CD14-positive monocyte (primary cell): ENCODE measurements at regions of chr3 and their contacts with region 1.

Region 1: DNA sequence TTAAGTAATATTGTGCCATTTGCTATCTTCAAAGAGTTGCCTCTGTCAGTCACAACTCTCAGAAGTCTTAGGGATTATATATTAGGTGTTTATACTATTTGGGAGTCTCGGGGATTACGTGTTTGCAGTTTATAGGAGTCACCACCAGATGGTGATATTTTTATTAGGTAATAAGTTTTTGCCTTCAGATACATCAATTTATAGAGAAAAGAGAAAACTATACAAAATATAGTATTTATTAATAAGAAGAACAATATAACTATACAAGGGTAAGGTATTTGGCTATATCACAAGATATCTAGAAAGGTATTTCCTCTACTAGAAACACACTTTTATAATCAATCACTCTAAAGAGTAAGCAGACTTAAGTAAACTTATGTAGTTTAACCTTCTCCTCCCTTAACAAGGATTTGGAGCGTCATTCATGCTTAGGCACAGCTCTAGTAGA is 10.7 kb upstream of the DHX36 start:
- DNase-seq: peak; percentile 7 to 49 (median 29)
- H3K4me3 ChIP-seq: no peak overlapping the region
- H3K4me3 Mint-ChIP-seq: no peak overlapping the region
- H3K27ac ChIP-seq: no peak overlapping the region
- H3K27ac Mint-ChIP-seq: no peak overlapping the region
- H3K4me1 ChIP-seq: no peaks in the 10 kb centered on the region
- H3K4me1 Mint-ChIP-seq: peaks cover 3% of the 10 kb centered on the region
- H3K27me3 ChIP-seq: no peaks in the 10 kb centered on the region
- H3K27me3 Mint-ChIP-seq: no peaks in the 10 kb centered on the region
- CTCF ChIP-seq: peak; percentile 82

Region 2: DNA sequence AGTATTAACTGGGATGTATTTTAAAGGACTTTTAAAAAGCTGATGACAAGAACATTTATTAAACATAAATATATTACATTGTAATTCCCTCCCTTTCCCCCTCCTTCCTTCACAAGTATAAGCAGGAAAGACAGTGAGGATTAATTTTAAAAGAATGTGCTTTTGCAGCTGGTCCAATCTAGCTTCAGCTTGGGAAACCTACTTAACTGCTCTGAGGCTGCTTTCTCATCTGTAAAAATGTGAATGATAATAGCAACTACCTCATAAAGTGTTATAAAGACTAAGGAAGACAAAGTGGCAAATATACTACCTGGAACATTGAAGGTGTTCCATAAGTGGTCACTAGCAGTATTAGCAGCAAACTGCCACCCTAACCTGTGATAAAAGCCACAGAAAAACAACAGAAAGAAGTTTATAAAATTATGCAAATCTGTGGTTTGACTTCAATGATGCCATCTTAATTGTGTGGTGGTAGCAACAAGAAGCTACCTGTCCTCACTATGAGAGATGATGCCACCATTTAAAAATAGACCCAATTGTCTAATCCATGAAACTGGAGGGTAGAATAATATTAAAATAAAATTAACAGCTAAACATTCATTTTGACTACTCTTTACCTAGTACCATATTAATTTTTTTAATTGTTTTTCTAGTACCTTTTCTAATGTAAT is 30.7 kb before region 1 on chr3:
- intact Hi-C with region 1: no loop called
- DNase-seq: no peak
- H3K4me3 ChIP-seq: no peak overlapping the region
- H3K4me3 Mint-ChIP-seq: no peak overlapping the region
- H3K27ac ChIP-seq: no peak overlapping the region
- H3K27ac Mint-ChIP-seq: no peak overlapping the region
- H3K4me1 ChIP-seq: no peaks in the 10 kb centered on the region
- H3K4me1 Mint-ChIP-seq: no peaks in the 10 kb centered on the region
- H3K27me3 ChIP-seq: no peaks in the 10 kb centered on the region
- H3K27me3 Mint-ChIP-seq: no peaks in the 10 kb centered on the region
- CTCF ChIP-seq: no peak

Region 3: GRCh38 chr3:155323063-155323666 is 988.2 kb after region 1 on chr3:
- intact Hi-C with region 1: loop called in 1 of 2 experiments (anchors 10 kb)
- DNase-seq: peak; percentile 21 to 59 (median 46)
- H3K4me3 ChIP-seq: no peak overlapping the region
- H3K4me3 Mint-ChIP-seq: no peak overlapping the region
- H3K27ac ChIP-seq: no peak overlapping the region
- H3K27ac Mint-ChIP-seq: no peak overlapping the region
- H3K4me1 ChIP-seq: no peaks in the 10 kb centered on the region
- H3K4me1 Mint-ChIP-seq: peaks cover 6% of the 10 kb centered on the region
- H3K27me3 ChIP-seq: no peaks in the 10 kb centered on the region
- H3K27me3 Mint-ChIP-seq: peaks cover 0 to 4% (median 4%) of the 10 kb centered on the region in 3 donors
- CTCF ChIP-seq: peak; percentile 68

Region 4: DNA sequence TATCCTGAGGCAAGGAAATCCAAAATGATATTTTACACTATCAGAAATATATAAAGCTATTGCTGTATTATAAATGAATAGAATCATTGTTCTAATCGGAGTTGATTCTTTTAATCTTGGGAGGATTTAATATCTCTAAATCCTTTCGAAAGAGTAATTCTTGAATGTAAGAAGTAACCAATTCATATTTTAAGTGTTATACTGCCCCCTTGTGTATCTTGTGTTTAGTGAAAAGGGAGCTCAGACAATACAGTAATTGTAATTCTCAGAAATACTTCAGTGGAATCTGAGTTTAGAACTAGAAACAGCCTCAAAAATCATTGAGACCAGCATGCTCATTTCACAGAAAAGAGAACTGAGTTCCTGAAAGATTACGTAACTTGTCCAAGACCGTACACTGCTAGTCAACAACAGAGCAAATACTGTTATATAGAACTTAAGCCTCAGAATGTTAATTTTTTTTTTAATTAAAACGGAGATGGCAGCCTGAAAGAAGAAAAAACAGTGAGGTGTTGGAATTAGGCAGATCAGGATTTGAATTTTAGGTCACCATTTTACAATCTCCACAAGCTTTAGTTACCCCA is 1367.0 kb after region 1 on chr3:
- intact Hi-C with region 1: loop called (anchors 10 kb)
- DNase-seq: peak; percentile 15 to 56 (median 30)
- H3K4me3 ChIP-seq: no peak overlapping the region
- H3K4me3 Mint-ChIP-seq: no peak overlapping the region
- H3K27ac ChIP-seq: no peak overlapping the region
- H3K27ac Mint-ChIP-seq: no peak overlapping the region
- H3K4me1 ChIP-seq: no peaks in the 10 kb centered on the region
- H3K4me1 Mint-ChIP-seq: peaks cover 4% of the 10 kb centered on the region
- H3K27me3 ChIP-seq: no peaks in the 10 kb centered on the region
- H3K27me3 Mint-ChIP-seq: peaks cover 0 to 1% (median 1%) of the 10 kb centered on the region in 3 donors
- CTCF ChIP-seq: peak; percentile 76